BJ (cell line): ENCODE measurements at regions of chr6 and their contacts with region 1.

Region 1: GRCh38 chr6:138817822-138818308 is 22.0 kb downstream of the ECT2L start:
- DNase-seq: peak; percentile 53
- H3K4me3 ChIP-seq: no peak overlapping the region
- H3K27me3 ChIP-seq: no peaks in the 10 kb centered on the region
- CTCF ChIP-seq: no peak

Region 2: DNA sequence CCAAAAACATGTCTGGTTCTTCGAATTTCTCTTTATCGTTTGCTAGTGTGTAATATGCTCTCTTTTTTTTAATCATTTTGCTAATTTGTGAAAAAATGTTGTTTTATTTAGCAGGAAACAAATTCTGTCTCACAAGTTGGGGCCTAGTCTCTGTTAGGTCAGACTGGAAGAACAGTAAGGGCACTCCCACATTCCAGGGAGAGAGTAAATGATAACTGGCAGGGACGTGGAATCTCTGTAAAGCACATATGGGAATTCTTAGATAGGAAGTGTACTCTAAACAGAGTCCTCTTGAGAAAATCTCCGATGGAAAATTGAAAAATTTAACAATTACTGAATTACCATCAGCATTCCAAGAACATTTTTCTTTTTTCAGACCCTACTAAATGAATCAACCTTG is 60.7 kb before region 1 on chr6:
- CTCF ChIA-PET with region 1: no interaction called
- POLR2A ChIA-PET with region 1: no interaction called
- DNase-seq: no peak
- H3K4me3 ChIP-seq: no peak overlapping the region
- H3K27me3 ChIP-seq: no peaks in the 10 kb centered on the region
- CTCF ChIP-seq: no peak

Region 3: GRCh38 chr6:138805016-138805765 is 12.7 kb before region 1 on chr6:
- CTCF ChIA-PET with region 1: interaction called, 24 read pairs
- POLR2A ChIA-PET with region 1: no interaction called
- DNase-seq: no peak
- H3K4me3 ChIP-seq: no peak overlapping the region
- H3K27me3 ChIP-seq: no peaks in the 10 kb centered on the region
- CTCF ChIP-seq: no peak

Region 4: GRCh38 chr6:138987640-138988468 is 170.0 kb after region 1 on chr6 and contains the start of gene REPS1:
- CTCF ChIA-PET with region 1: interaction called, 50 read pairs
- POLR2A ChIA-PET with region 1: no interaction called
- DNase-seq: no peak
- H3K4me3 ChIP-seq: peak within 1 kb of the TSS; percentile 93
- H3K27me3 ChIP-seq: no peaks in the 10 kb centered on the region
- CTCF ChIP-seq: peak; percentile 80
- polyA plus RNA-seq, gene REPS1: 27.2 and 29.9 TPM in 2 replicates

Region 5: GRCh38 chr6:139364302-139364981 is 546.6 kb after region 1 on chr6:
- CTCF ChIA-PET with region 1: interaction called, 15 read pairs
- POLR2A ChIA-PET with region 1: no interaction called
- DNase-seq: no peak
- H3K4me3 ChIP-seq: no peak overlapping the region
- H3K27me3 ChIP-seq: no peaks in the 10 kb centered on the region
- CTCF ChIP-seq: peak; percentile 48